Body of pancreas (tissue), 4 donors: ENCODE measurements at regions of chr6 and their contacts with region 1.

Region 1: DNA sequence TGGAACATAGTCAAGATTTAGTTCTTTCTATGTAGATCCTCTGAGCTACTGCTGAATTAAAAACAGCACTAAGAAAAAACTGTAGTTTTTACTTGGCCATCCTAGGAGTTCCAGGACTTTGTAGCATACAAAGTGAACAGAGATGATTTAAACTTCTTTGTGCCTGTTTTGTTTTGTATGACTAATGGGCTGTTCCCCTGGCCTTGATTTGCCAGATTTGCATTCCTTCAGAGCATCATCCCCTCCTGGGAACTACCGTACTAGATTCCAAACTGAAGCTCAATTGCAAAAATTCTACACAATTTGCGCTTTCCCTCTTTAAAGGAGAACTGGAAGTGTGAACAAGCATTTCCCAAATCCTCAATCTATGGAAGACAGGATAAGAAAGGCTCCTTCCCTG is 23.1 kb downstream of the ACOT13 start:
- DNase-seq: no peak
- ATAC-seq: no peak
- H3K4me3 ChIP-seq: no peak overlapping the region
- H3K27ac ChIP-seq: no peak overlapping the region
- H3K4me1 ChIP-seq: no peaks in the 10 kb centered on the region
- H3K27me3 ChIP-seq: no peaks in the 10 kb centered on the region
- CTCF ChIP-seq: no peak
- POLR2A ChIP-seq: no peak

Region 2: DNA sequence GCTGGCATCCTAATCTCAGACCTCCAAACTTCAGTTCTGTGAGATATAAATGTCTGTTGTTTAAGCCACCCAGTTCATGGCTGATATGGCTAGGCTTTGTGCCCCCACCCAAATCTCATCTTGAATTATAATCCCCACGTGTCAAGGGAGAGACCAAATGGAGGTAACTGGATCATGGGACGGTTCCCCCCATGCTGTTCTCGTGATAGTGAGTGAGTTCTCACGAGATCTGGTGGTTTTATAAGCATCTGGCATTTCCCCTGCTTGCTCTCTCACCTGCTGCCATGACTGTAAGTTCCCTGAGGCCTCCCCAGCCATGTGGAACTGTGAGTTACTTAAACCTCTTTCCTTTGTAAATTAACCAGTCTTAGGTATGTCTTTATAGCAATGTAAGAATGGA is 100.6 kb before region 1 on chr6:
- intact Hi-C with region 1: loop called (anchors 5 kb)
- DNase-seq: no peak
- ATAC-seq: no peak
- H3K4me3 ChIP-seq: no peak overlapping the region
- H3K27ac ChIP-seq: no peak overlapping the region
- H3K4me1 ChIP-seq: peaks cover 12% of the 10 kb centered on the region
- H3K27me3 ChIP-seq: no peaks in the 10 kb centered on the region
- CTCF ChIP-seq: no peak
- POLR2A ChIP-seq: no peak

Region 3: GRCh38 chr6:25369433-25370181 is 679.6 kb after region 1 on chr6:
- intact Hi-C with region 1: no loop called
- DNase-seq: peak; percentile 36 to 62 (median 57)
- ATAC-seq: peak; percentile 74
- H3K4me3 ChIP-seq: no peak overlapping the region
- H3K27ac ChIP-seq: peak overlapping the region; percentile 63 to 87 (median 78)
- H3K4me1 ChIP-seq: peaks cover 47% of the 10 kb centered on the region
- H3K27me3 ChIP-seq: no peaks in the 10 kb centered on the region
- CTCF ChIP-seq: no peak
- POLR2A ChIP-seq: peak in 1 of 3 donors; percentile 42